Sigmoid colon (tissue), 7 donors: ENCODE measurements at regions of chr4 and their contacts with region 1.

Region 1: GRCh38 chr4:139453371-139454110 is 380 bp upstream of the RAB33B start:
- DNase-seq: peak; percentile 99
- H3K4me3 ChIP-seq: peak overlapping the region; percentile 80 to 91 (median 87)
- H3K27ac ChIP-seq: peak overlapping the region; percentile 92 to 98 (median 94)
- H3K4me1 ChIP-seq: peaks cover 0 to 47% (median 32%) of the 10 kb centered on the region in 4 donors
- H3K27me3 ChIP-seq: no peaks in the 10 kb centered on the region
- CTCF ChIP-seq: peak in 1 of 4 experiments; percentile 8
- EP300 ChIP-seq: no peak
- POLR2A ChIP-seq: peak; percentile 80 to 83

Region 2: DNA sequence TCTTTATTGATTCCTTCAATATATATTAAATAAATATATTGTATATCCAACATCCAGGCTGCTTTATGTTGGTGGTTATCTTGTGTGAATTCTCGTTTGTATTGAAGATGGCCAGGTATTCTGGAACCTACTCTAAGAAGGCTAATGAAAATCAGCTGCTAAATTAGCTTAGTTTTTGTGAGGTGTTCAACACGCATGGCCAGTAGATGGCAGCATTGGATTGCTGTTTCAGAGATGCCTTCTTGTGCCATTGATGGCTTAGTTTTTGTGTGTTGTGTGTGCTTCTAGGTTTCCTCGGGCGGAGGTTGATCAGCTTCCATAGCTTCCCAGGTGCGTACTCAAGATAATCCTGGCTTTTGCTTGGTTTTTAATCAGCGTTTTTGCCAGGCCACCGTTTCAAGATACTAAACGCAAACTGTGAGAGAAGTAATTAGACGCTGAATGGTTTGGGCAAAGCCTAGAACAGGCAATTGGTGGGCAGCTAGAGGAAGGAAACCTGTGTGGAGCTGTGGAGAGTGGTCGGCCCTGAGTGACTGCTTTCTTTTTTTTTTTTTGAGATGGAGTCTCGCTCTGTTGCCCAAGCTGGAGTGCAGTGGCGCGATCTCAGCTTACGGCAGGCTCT is 422.8 kb before region 1 on chr4:
- intact Hi-C with region 1: loop called (anchors 10 kb)
- DNase-seq: peak; percentile 79
- H3K4me3 ChIP-seq: no peak overlapping the region
- H3K27ac ChIP-seq: peak overlapping the region in 1 of 4 donors; percentile 9
- H3K4me1 ChIP-seq: peaks cover 0 to 15% (median 10%) of the 10 kb centered on the region in 4 donors
- H3K27me3 ChIP-seq: no peaks in the 10 kb centered on the region
- CTCF ChIP-seq: peak; percentile 64 to 80 (median 75)
- EP300 ChIP-seq: no peak
- POLR2A ChIP-seq: no peak

Region 3: DNA sequence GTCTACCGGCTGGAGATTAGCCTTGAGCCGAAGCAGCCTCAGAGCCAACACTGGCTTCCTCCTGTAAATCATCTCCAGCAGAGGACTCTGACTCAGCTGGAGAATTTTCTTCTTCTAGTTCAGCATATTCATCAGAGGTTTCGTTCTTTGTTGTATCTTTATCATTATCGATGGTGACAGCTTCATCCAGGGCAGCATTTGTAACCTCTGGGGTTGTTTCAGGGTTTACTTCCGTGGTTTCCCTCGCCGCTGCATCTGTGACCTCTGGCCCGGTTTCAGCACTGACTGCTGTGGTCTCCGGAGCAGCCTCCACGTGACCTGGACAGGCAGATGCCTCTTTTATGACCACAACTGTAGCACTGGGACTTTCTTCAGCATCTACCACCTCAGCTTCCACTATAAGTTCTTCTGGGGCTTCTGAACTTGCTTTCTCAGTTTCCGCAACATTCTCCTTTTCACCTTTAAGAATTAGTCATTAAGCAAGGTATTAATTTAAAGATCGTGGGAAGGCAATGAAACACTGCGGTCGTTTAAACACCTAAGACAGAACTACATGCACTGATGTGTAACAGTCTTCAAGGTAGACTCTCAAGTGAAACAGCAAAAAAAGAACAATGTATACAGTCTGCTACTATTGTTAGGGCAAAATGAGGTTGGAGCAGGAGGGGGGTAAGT is 186.8 kb before region 1 on chr4:
- intact Hi-C with region 1: no loop called
- DNase-seq: peak; percentile 90
- H3K4me3 ChIP-seq: peak overlapping the region; percentile 21 to 52 (median 46)
- H3K27ac ChIP-seq: peak overlapping the region; percentile 34 to 76 (median 65)
- H3K4me1 ChIP-seq: peaks cover 0 to 15% (median 12%) of the 10 kb centered on the region in 4 donors
- H3K27me3 ChIP-seq: no peaks in the 10 kb centered on the region
- CTCF ChIP-seq: no peak
- EP300 ChIP-seq: no peak
- POLR2A ChIP-seq: no peak

Region 4: DNA sequence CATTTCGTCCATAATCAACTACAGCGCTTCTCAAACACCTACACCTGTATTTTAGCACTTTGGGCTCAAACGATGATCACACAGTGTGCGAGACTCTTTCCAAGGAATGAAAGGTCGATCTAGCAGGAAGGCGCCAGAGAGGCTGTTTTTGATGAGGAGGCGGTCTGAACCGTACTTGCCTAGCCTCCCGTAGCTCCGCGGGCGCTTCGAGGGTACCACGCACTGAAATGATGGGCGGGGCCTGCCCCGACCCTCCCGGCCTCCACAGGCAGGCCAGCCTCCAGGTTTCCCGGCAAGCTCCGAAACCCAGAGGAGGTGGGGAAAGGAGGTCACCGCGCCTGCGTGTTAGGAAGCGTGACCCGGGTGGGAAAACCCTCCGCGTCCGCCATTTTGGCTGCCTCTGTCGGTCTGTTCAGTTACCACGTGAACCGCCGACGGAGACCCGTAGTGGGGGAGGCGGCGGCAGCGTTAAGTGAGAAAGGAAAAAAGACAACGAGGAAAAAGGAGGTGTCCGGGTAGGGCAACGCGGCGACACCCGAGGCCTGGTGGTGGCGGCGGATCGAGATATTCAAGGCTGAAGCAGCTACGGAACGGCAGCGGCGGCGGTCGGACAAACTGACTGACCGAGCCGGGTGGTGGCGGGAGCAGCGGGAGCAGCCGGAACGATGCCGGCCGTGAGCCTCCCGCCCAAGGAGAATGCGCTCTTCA is 152.3 kb before region 1 on chr4 and contains the start of gene NAA15:
- intact Hi-C with region 1: loop called (anchors 10 kb)
- DNase-seq: peak; percentile 99
- H3K4me3 ChIP-seq: peak within 1 kb of the TSS; percentile 87 to 99 (median 96)
- H3K27ac ChIP-seq: peak within 1 kb of the TSS; percentile 93 to 98 (median 96)
- H3K4me1 ChIP-seq: peaks cover 0 to 60% (median 35%) of the 10 kb centered on the region in 4 donors
- H3K27me3 ChIP-seq: no peaks in the 10 kb centered on the region
- CTCF ChIP-seq: no peak
- EP300 ChIP-seq: peak in 1 of 4 donors; percentile 68
- POLR2A ChIP-seq: peak; percentile 87
- total RNA-seq, gene NAA15: 21.6 to 40.3 (median 28.9) TPM

Region 5: GRCh38 chr4:139416073-139416673 is 37.4 kb before region 1 on chr4:
- intact Hi-C with region 1: loop called (anchors 5 kb)
- DNase-seq: no peak
- H3K4me3 ChIP-seq: no peak overlapping the region
- H3K27ac ChIP-seq: no peak overlapping the region
- H3K4me1 ChIP-seq: no peaks in the 10 kb centered on the region
- H3K27me3 ChIP-seq: no peaks in the 10 kb centered on the region
- CTCF ChIP-seq: peak; percentile 28 to 65 (median 50)
- EP300 ChIP-seq: no peak
- POLR2A ChIP-seq: no peak

Region 6: GRCh38 chr4:139530833-139531427 is 77.4 kb after region 1 on chr4:
- intact Hi-C with region 1: no loop called
- DNase-seq: no peak
- H3K4me3 ChIP-seq: no peak overlapping the region
- H3K27ac ChIP-seq: no peak overlapping the region
- H3K4me1 ChIP-seq: peaks cover 0 to 8% (median 5%) of the 10 kb centered on the region in 4 donors
- H3K27me3 ChIP-seq: no peaks in the 10 kb centered on the region
- CTCF ChIP-seq: peak in 3 of 4 experiments; percentile 22 to 55 (median 23)
- EP300 ChIP-seq: no peak
- POLR2A ChIP-seq: no peak